Right ventricle myocardium superior (tissue), 1 donor: ENCODE measurements at regions of chr20 and their contacts with region 1.

Region 1: DNA sequence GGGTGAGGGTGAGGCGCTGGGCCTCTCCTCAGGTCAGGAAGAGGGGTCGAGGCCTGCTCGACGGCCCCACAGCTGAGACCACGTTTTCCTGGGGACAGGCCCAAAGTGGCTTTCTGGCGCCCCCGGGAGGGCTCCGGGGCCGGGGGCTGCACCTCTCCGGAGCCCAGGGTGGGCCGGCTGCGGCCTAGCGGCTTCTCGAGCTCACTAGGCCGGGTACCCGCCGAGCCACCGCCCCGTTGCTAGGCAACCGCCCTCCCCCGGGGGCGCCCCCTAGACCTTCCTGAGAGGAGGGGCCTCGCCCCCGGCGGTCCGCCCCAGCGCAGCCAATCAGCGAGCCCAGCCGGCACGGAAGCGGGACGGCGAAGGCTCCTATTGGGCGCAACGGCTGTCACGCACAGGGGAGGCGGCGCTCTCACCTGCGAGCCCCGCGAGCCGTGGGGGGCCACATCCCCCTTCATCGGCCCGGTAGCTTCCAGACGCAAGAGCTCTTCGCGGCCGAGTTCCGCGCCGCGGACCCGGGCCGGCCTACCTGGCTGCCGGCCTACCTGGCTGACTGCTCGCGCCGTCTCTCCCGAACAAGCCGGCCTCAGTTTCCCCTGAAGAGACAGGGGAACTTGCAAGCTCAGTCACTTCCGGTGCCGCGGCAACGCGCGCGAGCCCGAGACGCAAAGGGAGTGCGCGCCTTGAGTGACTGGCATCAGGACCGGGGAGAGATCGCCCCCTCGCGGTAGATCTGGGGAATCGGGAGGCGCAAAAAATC is 831 bp upstream of the BCL2L1 start:
- DNase-seq: peak; percentile 98
- ATAC-seq: peak; percentile 95

Region 2: DNA sequence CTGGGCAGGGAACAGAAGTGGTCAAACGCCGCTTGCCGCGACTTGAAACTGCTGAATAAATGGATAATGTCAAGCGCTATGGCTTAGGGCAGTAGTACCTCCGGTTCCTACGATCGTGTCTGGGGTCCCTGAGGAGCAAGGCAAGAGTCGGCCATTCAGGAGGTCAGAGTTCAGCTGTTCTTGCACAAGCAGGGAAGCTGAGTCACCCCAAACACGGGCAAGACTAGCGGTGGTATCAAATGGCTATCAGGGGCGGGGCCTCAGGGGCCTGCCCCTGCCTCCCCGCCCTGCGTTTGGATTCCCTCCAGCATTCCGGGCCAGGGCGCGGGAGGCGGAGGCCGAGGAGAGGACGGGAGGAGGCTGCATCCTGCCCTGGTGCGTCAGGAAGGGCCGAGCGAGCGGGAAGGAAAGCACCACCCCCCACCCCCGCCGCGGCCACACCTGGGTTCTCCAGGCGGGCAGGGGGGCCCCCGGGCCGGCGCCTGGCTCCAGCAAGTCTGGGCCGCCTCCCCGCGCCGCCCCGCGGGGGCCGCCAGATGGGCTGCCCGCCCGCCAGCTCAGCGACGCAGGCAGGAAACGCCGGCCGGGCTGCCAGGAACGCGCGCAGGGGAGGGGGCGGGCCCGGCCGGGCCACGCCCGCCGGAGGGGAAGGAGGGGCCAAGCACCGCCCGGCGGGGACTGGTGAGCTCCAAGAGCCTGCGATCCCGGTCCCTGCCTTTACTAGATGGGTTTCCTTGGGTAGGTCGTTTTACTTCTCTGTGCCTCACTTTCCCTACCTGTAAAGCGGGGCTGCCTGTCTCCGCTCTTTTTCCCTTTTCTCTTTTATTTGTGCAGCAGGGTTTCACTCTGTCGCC is 150.6 kb before region 1 on chr20:
- intact Hi-C with region 1: loop called (anchors 5 kb)
- DNase-seq: peak; percentile 94
- ATAC-seq: peak; percentile 92

Region 3: GRCh38 chr20:31661625-31662371 is 61.7 kb before region 1 on chr20:
- intact Hi-C with region 1: loop called (anchors 2 kb)
- DNase-seq: peak; percentile 89
- ATAC-seq: peak; percentile 81

Region 4: GRCh38 chr20:31691646-31692275 is 31.7 kb before region 1 on chr20:
- intact Hi-C with region 1: no loop called
- DNase-seq: no peak
- ATAC-seq: no peak